H1 (cell line): ENCODE measurements at regions of chr6 and their contacts with region 1.

Region 1: DNA sequence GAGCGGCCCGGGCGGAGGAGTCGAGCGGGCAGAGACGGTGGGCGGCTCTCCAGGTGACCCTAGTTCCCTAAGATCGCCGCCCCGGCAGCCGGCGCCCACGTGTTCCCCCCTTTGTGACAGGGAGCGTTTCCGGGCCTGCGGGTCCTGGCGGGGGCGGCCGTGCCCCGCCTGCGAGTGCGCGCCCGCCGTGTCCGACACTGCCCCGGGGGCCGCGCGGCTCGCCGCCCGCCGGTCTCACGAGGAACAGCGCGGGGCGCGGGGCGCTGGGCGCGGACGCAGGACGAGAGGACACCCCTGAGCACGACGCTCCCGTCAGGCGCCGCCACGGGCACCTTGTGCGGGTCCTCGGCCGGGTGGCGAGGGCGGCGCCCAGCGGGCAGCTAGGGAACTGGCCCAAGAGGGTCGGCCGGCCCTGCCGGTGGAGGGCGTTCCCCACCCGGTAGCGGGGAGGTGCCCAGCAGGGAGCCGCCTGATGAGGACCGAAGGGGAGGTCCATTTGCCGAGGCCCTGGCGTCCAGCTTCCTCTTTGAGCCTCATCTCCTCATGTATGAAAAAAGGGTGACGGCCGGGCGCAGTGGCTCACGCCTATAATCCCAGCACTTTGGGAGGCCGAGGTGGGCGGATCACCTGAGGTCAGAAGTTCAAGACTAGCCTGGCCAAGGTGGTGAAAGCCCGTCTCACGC is at the start of gene VARS1:
- DNase-seq: peak in 1 of 2 experiments; percentile 96
- H3K4me3 ChIP-seq: peak within 1 kb of the TSS; percentile 82 to 95 (median 90)
- H3K27ac ChIP-seq: peak within 1 kb of the TSS; percentile 99
- H3K4me1 ChIP-seq: peaks cover 0 to 2% (median under 1%) of the 10 kb centered on the region in 4 experiments; a peak in 3 of 7 replicates
- H3K27me3 ChIP-seq: no peaks in the 10 kb centered on the region
- CTCF ChIP-seq: peak; percentile 92 to 99 (median 94)
- EP300 ChIP-seq: peak in 1 of 2 experiments; percentile 44; a peak in 1 of 3 replicates
- POLR2A ChIP-seq: peak in 1 of 2 experiments; percentile 72; a peak in 2 of 3 replicates
- RAD21 ChIP-seq: peak; percentile 71 to 79
- total RNA-seq, gene VARS1: 162 and 163 TPM in 2 replicates

Region 2: GRCh38 chr6:31776989-31777666 is 18.6 kb before region 1 on chr6 and contains the start of gene VWA7:
- CTCF ChIA-PET with region 1: interaction called, 228 read pairs
- POLR2A ChIA-PET with region 1: interaction called, 85 read pairs
- DNase-seq: peak in 1 of 2 experiments; percentile 63
- H3K4me3 ChIP-seq: no peak within 1 kb of the TSS
- H3K27ac ChIP-seq: peak within 1 kb of the TSS; percentile 26; the same call in 1 of the 2 replicates
- H3K4me1 ChIP-seq: peaks cover 0 to 7% (median 3%) of the 10 kb centered on the region in 4 experiments; a peak in 4 of 7 replicates
- H3K27me3 ChIP-seq: no peaks in the 10 kb centered on the region; a peak in 1 of 7 replicates
- CTCF ChIP-seq: no peak
- EP300 ChIP-seq: no peak
- POLR2A ChIP-seq: 0 out of 3 replicates have a peak, but pooled peaks of 1 of the 2 experiments have one; percentile 19
- RAD21 ChIP-seq: no peak
- total RNA-seq, gene VWA7: 1.5 and 2.1 TPM in 2 replicates

Region 3: GRCh38 chr6:31806465-31807272 is 10.9 kb after region 1 on chr6 and contains the start of gene LSM2:
- CTCF ChIA-PET with region 1: interaction called, 15 read pairs
- POLR2A ChIA-PET with region 1: interaction called, 42 read pairs
- DNase-seq: peak in 1 of 2 experiments; percentile 99
- H3K4me3 ChIP-seq: peak within 1 kb of the TSS; percentile 76 to 96 (median 86)
- H3K27ac ChIP-seq: peak within 1 kb of the TSS; percentile 91
- H3K4me1 ChIP-seq: peaks cover 0 to 2% (median 0%) of the 10 kb centered on the region in 4 experiments; a peak in 1 of 7 replicates
- H3K27me3 ChIP-seq: no peaks in the 10 kb centered on the region
- CTCF ChIP-seq: no peak
- EP300 ChIP-seq: no peak
- POLR2A ChIP-seq: peak; percentile 58 to 69
- RAD21 ChIP-seq: 0 out of 4 replicates have a peak, but pooled peaks have one; percentile 1 to 8
- total RNA-seq, gene LSM2: 127 and 132 TPM in 2 replicates

Region 4: GRCh38 chr6:31815025-31815838 is 19.5 kb after region 1 on chr6 and contains the starts of genes HSPA1A and HSPA1L:
- CTCF ChIA-PET with region 1: interaction called, 28 read pairs
- POLR2A ChIA-PET with region 1: interaction called, 27 read pairs
- DNase-seq: peak; percentile 91 to 93
- H3K4me3 ChIP-seq: peak within 1 kb of the TSS; percentile 54 to 77 (median 65)
- H3K27ac ChIP-seq: peak within 1 kb of the TSS; percentile 37; the same call in 1 of the 2 replicates
- H3K4me1 ChIP-seq: peaks cover 0 to 5% (median 3%) of the 10 kb centered on the region in 4 experiments; a peak in 5 of 7 replicates
- H3K27me3 ChIP-seq: no peaks in the 10 kb centered on the region
- CTCF ChIP-seq: no peak
- EP300 ChIP-seq: no peak
- POLR2A ChIP-seq: peak; percentile 97
- RAD21 ChIP-seq: no peak
- total RNA-seq, gene HSPA1A: 54.0 and 59.9 TPM in 2 replicates
- total RNA-seq, gene HSPA1L: 1.6 and 1.9 TPM in 2 replicates

Region 5: DNA sequence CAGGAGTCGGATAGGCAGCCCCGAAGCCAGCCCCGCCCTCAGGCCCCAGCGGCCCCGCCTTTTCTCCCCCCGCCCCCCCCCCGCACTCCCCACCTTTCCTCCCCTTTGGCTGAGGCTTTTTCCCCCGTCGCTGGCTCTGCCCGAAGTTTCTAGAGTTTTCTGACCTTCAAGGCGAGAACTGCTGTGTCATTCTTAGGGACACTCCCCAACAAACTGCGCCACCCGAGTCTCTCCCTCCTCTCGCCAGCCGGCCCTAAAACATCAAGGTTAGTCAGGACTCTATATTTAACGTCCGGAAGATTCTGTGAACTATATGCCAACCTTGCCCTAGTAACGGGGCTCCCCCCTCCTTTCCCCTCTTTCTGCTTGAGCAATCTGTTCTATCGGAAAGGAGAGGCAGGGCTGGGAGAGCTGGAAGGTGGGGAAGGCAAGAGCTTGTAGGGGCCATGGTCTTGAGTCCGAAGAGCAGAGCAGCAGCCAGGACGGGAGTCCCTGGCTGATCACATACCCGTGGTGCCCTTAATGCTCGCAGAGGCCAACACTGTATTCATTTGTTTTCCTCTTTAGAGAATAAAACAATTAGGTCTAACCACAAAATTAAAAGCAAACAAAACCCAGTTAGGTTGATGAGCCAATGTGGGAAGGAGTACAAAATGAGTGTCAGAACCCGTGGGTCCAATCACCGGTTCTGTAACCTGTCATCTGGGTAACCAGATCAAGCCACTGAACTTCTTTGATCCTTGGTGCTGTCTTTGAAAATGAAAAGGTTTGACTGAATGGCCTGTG is 26.5 kb after region 1 on chr6:
- CTCF ChIA-PET with region 1: interaction called, 7 read pairs
- POLR2A ChIA-PET with region 1: interaction called, 30 read pairs
- DNase-seq: peak in 1 of 2 experiments; percentile 74
- H3K4me3 ChIP-seq: peak overlapping the region; percentile 66 to 87 (median 78)
- H3K27ac ChIP-seq: peak overlapping the region; percentile 52; the same call in 1 of the 2 replicates
- H3K4me1 ChIP-seq: peaks cover 5 to 16% (median 9%) of the 10 kb centered on the region in 4 experiments; a peak in 6 of 7 replicates
- H3K27me3 ChIP-seq: no peaks in the 10 kb centered on the region; a peak in 1 of 7 replicates
- CTCF ChIP-seq: no peak
- EP300 ChIP-seq: no peak
- POLR2A ChIP-seq: no peak
- RAD21 ChIP-seq: no peak